ENCODE measurements at regions of chr9 and their contacts with region 1.

Region 1: GRCh38 chr9:105500108-105500766 is 52.4 kb downstream of the FSD1L start:
- DNase-seq: peak; percentile 62
- ATAC-seq: peak; percentile 75
- H3K4me3 ChIP-seq: peak overlapping the region; percentile 69
- H3K27ac ChIP-seq: peak overlapping the region; percentile 71
- H3K4me1 ChIP-seq: peaks cover 16% of the 10 kb centered on the region
- H3K27me3 ChIP-seq: no peaks in the 10 kb centered on the region
- CTCF ChIP-seq: no peak
- EP300 ChIP-seq: peak in 1 of 2 experiments; percentile 50; a peak in 1 of 4 replicates
- POLR2A ChIP-seq: no peak
- RAD21 ChIP-seq: peak; percentile 21; the same call in 1 of the 2 replicates

Region 2: DNA sequence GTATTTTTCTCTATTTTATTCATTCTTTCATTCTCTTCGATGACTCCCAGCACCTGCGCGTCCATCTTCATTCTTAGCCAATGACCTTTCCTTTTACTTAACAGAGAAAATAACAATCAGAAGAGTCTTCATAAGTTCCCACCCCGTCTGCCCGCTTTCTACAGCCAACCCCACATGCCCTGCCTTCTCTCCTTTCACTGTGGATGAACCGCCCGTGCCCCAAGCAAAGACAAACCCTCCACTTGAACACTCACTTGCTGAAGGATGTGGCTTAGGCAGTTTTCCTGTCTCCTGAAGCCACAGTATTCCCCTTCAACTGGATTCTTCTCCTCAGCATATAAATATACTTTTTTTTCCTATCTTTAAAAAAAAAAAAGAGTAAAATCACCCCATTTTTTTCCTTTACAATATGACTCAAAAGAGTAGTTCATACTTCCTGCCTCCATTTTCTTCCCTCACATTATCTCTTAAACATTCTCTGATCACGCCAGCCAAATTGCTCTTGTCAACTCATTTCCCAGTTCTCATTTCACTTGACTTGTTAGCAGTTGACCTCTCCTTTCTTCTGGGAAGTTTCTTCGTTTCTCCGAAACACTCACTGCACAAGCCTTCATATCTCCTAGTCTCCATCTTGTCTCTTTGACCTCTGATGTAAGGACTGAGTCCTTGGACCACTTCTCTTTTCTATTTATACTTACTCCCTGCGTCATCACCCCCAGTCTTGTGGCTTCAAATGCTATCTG is 725.2 kb before region 1 on chr9:
- CTCF ChIA-PET with region 1: no interaction called
- POLR2A ChIA-PET with region 1: interaction called, 5 read pairs
- RAD21 ChIA-PET with region 1: interaction called, 3 read pairs
- SMC1A ChIA-PET with region 1: interaction called, 3 read pairs
- in situ Hi-C with region 1: no loop called
- intact Hi-C with region 1: loop called (anchors 5 kb)
- DNase-seq: peak; percentile 85
- ATAC-seq: peak; percentile 84
- H3K4me3 ChIP-seq: peak overlapping the region; percentile 63
- H3K27ac ChIP-seq: peak overlapping the region; percentile 98
- H3K4me1 ChIP-seq: peaks cover 17% of the 10 kb centered on the region
- H3K27me3 ChIP-seq: no peaks in the 10 kb centered on the region
- CTCF ChIP-seq: no peak
- EP300 ChIP-seq: peak; percentile 13 to 57; a peak in 2 of 4 replicates
- POLR2A ChIP-seq: peak; percentile 73
- RAD21 ChIP-seq: no peak

Region 3: GRCh38 chr9:105341434-105342144 is 158.6 kb before region 1 on chr9:
- CTCF ChIA-PET with region 1: no interaction called
- POLR2A ChIA-PET with region 1: no interaction called
- RAD21 ChIA-PET with region 1: no interaction called
- SMC1A ChIA-PET with region 1: no interaction called
- in situ Hi-C with region 1: no loop called
- intact Hi-C with region 1: no loop called
- DNase-seq: no peak
- ATAC-seq: peak; percentile 80
- H3K4me3 ChIP-seq: no peak overlapping the region
- H3K27ac ChIP-seq: no peak overlapping the region
- H3K4me1 ChIP-seq: peaks cover 7% of the 10 kb centered on the region; the same call in 1 of the 2 replicates
- H3K27me3 ChIP-seq: no peaks in the 10 kb centered on the region
- CTCF ChIP-seq: no peak
- EP300 ChIP-seq: no peak
- POLR2A ChIP-seq: no peak
- RAD21 ChIP-seq: no peak

Region 4: DNA sequence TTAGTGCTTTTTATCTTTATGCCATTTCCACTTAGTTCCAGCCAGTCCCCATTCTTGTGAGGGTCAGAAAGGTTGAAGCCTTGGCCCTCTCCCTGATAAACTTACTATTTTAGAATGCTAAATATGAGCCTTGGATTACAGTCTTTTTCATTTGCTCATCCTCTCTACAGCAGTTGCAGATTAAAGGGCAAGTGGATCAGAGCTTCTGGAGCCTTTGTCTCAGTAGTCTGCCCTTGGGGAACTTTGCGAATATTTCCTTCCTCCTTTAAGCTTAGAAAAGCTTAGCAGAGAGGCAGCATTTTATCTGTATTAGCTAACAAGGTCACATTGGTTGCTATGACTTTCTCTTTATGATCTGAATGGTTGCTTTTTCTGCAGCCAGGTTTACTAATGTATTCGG is 40.9 kb before region 1 on chr9:
- CTCF ChIA-PET with region 1: no interaction called
- POLR2A ChIA-PET with region 1: no interaction called
- RAD21 ChIA-PET with region 1: no interaction called
- SMC1A ChIA-PET with region 1: no interaction called
- in situ Hi-C with region 1: no loop called
- intact Hi-C with region 1: no loop called
- DNase-seq: no peak
- ATAC-seq: no peak
- H3K4me3 ChIP-seq: no peak overlapping the region
- H3K27ac ChIP-seq: no peak overlapping the region
- H3K4me1 ChIP-seq: no peaks in the 10 kb centered on the region
- H3K27me3 ChIP-seq: no peaks in the 10 kb centered on the region
- CTCF ChIP-seq: no peak
- EP300 ChIP-seq: no peak
- POLR2A ChIP-seq: no peak
- RAD21 ChIP-seq: no peak

Region 5: GRCh38 chr9:105483618-105484017 is 16.6 kb before region 1 on chr9:
- CTCF ChIA-PET with region 1: interaction called, 9 read pairs
- POLR2A ChIA-PET with region 1: interaction called, 7 read pairs
- RAD21 ChIA-PET with region 1: interaction called, 5 read pairs
- SMC1A ChIA-PET with region 1: interaction called, 25 read pairs
- in situ Hi-C with region 1: no loop called
- intact Hi-C with region 1: no loop called
- DNase-seq: no peak
- ATAC-seq: peak; percentile 97
- H3K4me3 ChIP-seq: no peak overlapping the region
- H3K27ac ChIP-seq: no peak overlapping the region
- H3K4me1 ChIP-seq: peaks cover 8% of the 10 kb centered on the region
- H3K27me3 ChIP-seq: no peaks in the 10 kb centered on the region
- CTCF ChIP-seq: peak in 1 of 3 experiments; percentile 37; a peak in 1 of 6 replicates
- EP300 ChIP-seq: no peak
- POLR2A ChIP-seq: no peak
- RAD21 ChIP-seq: peak; percentile 31; the same call in 1 of the 2 replicates

Region 6: DNA sequence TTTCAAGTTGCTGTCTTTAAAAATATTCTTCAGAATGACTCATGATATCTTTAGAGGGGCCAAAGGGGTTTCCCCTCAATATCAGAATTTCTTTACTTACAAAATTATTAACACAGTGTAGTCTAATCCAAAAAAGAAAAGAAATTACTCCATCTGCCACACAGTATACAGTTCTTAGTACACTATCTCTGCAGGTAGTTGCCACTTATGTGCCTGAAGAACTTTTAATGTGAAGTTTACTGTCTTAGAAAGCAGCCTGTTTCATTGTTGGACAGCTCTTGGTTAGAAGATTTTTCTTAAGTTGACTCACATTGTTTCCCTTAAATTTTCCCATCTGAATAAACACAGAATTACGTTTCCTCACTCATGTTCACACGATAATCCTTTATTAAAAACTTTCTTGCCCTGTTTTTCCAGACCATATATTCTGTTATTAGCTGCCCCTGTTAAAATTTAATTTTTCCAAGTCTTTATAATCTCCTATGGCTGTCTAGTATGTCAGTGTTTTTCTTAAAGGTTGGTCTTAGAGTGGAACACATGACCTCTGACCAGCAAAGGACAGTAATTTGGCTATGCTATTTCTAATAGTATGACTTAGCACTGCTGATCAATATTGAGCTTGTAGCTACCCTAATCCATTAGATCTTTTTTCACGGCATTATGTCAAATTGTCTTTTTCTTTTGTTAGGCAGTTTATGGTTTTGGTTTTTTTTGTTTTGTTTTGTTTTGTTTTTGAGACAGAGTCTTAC is 35.9 kb after region 1 on chr9:
- CTCF ChIA-PET with region 1: interaction called, 8 read pairs
- POLR2A ChIA-PET with region 1: interaction called, 9 read pairs
- RAD21 ChIA-PET with region 1: interaction called, 21 read pairs
- SMC1A ChIA-PET with region 1: interaction called, 29 read pairs
- in situ Hi-C with region 1: no loop called
- intact Hi-C with region 1: loop called (anchors 2 kb)
- DNase-seq: no peak
- ATAC-seq: peak; percentile 84
- H3K4me3 ChIP-seq: no peak overlapping the region
- H3K27ac ChIP-seq: peak overlapping the region; percentile 49
- H3K4me1 ChIP-seq: peaks cover 8% of the 10 kb centered on the region
- H3K27me3 ChIP-seq: no peaks in the 10 kb centered on the region
- CTCF ChIP-seq: no peak
- EP300 ChIP-seq: no peak
- POLR2A ChIP-seq: no peak
- RAD21 ChIP-seq: no peak

Region 7: DNA sequence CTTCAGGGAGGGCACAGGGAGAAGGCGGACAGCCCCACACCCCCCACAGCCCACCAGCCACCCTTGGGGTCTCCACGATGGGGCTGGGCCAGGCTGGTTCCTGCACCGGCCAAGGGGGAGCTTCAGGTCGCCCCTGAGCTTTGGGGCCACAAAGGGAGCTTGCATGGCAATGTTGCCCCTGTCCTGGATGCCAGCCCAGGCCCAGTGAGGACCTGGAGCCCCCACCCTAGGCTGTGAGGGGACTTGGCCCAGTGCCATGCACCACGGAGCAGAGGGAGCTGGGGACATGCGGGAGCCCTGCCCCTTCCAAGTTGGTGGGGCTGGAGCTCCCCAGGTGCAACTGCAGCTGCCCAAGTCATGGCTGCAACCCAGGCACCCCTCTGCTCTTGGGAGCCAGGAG is 212.5 kb after region 1 on chr9:
- CTCF ChIA-PET with region 1: no interaction called
- POLR2A ChIA-PET with region 1: no interaction called
- RAD21 ChIA-PET with region 1: no interaction called
- SMC1A ChIA-PET with region 1: no interaction called
- in situ Hi-C with region 1: no loop called
- intact Hi-C with region 1: no loop called
- DNase-seq: no peak
- ATAC-seq: no peak
- H3K4me3 ChIP-seq: no peak overlapping the region
- H3K27ac ChIP-seq: no peak overlapping the region
- H3K4me1 ChIP-seq: no peaks in the 10 kb centered on the region
- H3K27me3 ChIP-seq: no peaks in the 10 kb centered on the region
- CTCF ChIP-seq: no peak
- EP300 ChIP-seq: no peak
- POLR2A ChIP-seq: no peak
- RAD21 ChIP-seq: no peak